Calu3 (cell line): ENCODE measurements at regions of chr11 and their contacts with region 1.

Region 1: GRCh38 chr11:62427630-62428233 is 8.9 kb downstream of the SCGB1A1 start:
- DNase-seq: no peak
- H3K4me3 Mint-ChIP-seq: no peak overlapping the region
- H3K27ac Mint-ChIP-seq: no peak overlapping the region
- H3K4me1 Mint-ChIP-seq: peaks cover 41% of the 10 kb centered on the region
- H3K27me3 Mint-ChIP-seq: peaks cover 24% of the 10 kb centered on the region
- CTCF ChIP-seq: no peak

Region 2: GRCh38 chr11:62394825-62395538 is 32.8 kb before region 1 on chr11:
- CTCF ChIA-PET with region 1: interaction called, 4 read pairs
- intact Hi-C with region 1: loop called (anchors 5 kb)
- DNase-seq: peak; percentile 51
- H3K4me3 Mint-ChIP-seq: no peak overlapping the region
- H3K27ac Mint-ChIP-seq: no peak overlapping the region
- H3K4me1 Mint-ChIP-seq: no peaks in the 10 kb centered on the region
- H3K27me3 Mint-ChIP-seq: no peaks in the 10 kb centered on the region
- CTCF ChIP-seq: peak; percentile 70

Region 3: GRCh38 chr11:62439785-62440602 is 12.3 kb after region 1 on chr11:
- CTCF ChIA-PET with region 1: no interaction called
- intact Hi-C with region 1: no loop called
- DNase-seq: no peak
- H3K4me3 Mint-ChIP-seq: no peak overlapping the region
- H3K27ac Mint-ChIP-seq: no peak overlapping the region
- H3K4me1 Mint-ChIP-seq: peaks cover 10% of the 10 kb centered on the region
- H3K27me3 Mint-ChIP-seq: peaks cover 6% of the 10 kb centered on the region
- CTCF ChIP-seq: no peak

Region 4: GRCh38 chr11:62479631-62480201 is 52.0 kb after region 1 on chr11:
- CTCF ChIA-PET with region 1: no interaction called
- intact Hi-C with region 1: loop called (anchors 5 kb)
- DNase-seq: no peak
- H3K4me3 Mint-ChIP-seq: no peak overlapping the region
- H3K27ac Mint-ChIP-seq: no peak overlapping the region
- H3K4me1 Mint-ChIP-seq: no peaks in the 10 kb centered on the region
- H3K27me3 Mint-ChIP-seq: no peaks in the 10 kb centered on the region
- CTCF ChIP-seq: no peak

Region 5: DNA sequence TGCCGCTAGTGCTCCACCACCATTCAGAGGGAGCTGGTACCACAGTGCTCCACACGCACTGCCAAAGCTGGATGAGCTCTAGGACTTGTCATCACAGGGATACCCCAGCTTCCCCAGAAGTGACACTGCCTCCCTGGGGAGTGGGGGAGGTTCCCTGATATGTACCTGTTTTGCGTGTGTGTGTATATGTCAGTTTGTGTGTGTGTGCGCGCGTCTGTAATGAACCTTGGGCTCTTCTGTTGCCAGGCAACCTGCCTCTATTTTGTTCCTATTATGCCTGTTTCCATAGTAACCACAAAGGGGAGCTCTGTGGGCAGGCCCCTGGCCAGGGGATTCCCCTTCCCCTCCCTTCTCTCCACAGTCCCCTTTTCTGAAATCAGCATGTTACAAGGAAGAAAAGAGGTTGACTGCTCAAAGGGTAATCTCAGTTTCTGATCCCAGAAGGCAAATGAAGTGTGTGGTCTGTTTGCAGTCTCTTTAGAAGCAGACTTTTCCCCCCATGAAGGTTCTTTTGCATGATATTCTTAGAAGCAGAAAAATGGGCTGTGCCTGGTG is 124.0 kb after region 1 on chr11:
- CTCF ChIA-PET with region 1: interaction called, 16 read pairs
- intact Hi-C with region 1: no loop called
- DNase-seq: peak; percentile 87
- H3K4me3 Mint-ChIP-seq: peak overlapping the region; percentile 54
- H3K27ac Mint-ChIP-seq: peak overlapping the region; percentile 98
- H3K4me1 Mint-ChIP-seq: peaks cover 78% of the 10 kb centered on the region
- H3K27me3 Mint-ChIP-seq: no peaks in the 10 kb centered on the region
- CTCF ChIP-seq: no peak